ENCODE measurements at regions of chr2 and their contacts with region 1.

Region 1: DNA sequence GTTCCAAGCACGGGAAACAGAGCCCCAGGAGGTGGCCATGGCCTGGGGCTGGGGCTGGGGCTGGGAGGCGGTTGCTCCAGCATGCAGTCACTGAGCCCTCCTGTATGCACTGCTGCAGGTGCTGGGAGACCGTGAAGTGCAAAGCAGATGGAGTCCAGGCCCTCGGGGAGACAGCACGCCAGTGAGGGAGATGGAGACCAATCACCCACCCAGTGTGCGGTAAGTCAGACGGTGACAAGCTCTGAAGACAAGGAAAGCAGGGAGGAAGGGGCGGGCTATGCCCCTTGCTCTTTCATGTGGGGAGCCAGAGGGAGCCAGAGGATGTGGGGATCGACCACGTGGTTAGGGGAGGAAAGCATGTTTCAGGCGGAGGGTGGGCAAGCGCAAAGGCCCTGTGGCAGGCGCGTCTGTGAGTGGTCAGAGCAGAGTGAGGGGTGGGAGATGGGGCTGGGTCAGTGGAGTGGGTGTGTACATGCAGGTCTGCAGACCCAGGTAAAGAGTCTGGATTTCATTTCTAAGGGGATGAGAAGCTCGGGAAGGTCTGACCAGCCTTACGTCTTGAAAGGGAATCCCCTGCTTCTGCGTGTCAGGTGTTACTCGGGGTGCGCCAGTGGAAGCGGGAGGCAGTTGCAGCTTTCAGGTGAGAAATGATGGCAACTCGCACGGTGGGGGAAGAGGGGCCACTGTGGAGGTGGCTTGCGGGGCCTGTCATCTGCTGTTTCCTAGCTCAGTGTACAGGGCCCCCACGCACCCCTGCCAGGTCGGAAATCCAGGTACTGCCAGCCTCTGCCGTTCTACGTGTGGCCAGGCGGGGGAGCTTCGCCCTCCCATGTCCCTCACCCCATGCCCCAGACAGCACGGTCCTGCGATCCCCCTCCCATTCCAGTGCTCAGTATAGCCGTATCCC is 19.4 kb downstream of the RRM2 start:
- DNase-seq: peak; percentile 40 to 56 (median 47)
- H3K4me3 ChIP-seq: no peak overlapping the region
- H3K4me3 Mint-ChIP-seq: peak overlapping the region in 6 of 8 donors; percentile 32 to 75 (median 64)
- H3K27ac ChIP-seq: no peak overlapping the region
- H3K27ac Mint-ChIP-seq: peak overlapping the region; percentile 4 to 81 (median 70)
- H3K4me1 ChIP-seq: peaks cover 20% of the 10 kb centered on the region
- H3K4me1 Mint-ChIP-seq: peaks cover 16 to 27% (median 19%) of the 10 kb centered on the region in 4 donors
- H3K27me3 ChIP-seq: no peaks in the 10 kb centered on the region
- H3K27me3 Mint-ChIP-seq: no peaks in the 10 kb centered on the region

Region 2: GRCh38 chr2:10129490-10129889 is 12.5 kb before region 1 on chr2:
- CTCF ChIA-PET with region 1: interaction called, 23 read pairs
- POLR2A ChIA-PET with region 1: interaction called, 10 read pairs
- intact Hi-C with region 1: no loop called
- DNase-seq: no peak
- H3K4me3 ChIP-seq: no peak overlapping the region
- H3K4me3 Mint-ChIP-seq: no peak overlapping the region
- H3K27ac ChIP-seq: no peak overlapping the region
- H3K27ac Mint-ChIP-seq: no peak overlapping the region
- H3K4me1 ChIP-seq: peaks cover 10% of the 10 kb centered on the region
- H3K4me1 Mint-ChIP-seq: peaks cover 19 to 26% (median 22%) of the 10 kb centered on the region in 4 donors
- H3K27me3 ChIP-seq: no peaks in the 10 kb centered on the region
- H3K27me3 Mint-ChIP-seq: peaks cover 0 to 1% of the 10 kb centered on the region in 2 donors

Region 3: GRCh38 chr2:10157293-10157692 is 15.3 kb after region 1 on chr2:
- CTCF ChIA-PET with region 1: interaction called, 19 read pairs
- POLR2A ChIA-PET with region 1: interaction called, 3 read pairs
- intact Hi-C with region 1: no loop called
- DNase-seq: no peak
- H3K4me3 ChIP-seq: no peak overlapping the region
- H3K4me3 Mint-ChIP-seq: no peak overlapping the region
- H3K27ac ChIP-seq: no peak overlapping the region
- H3K27ac Mint-ChIP-seq: no peak overlapping the region
- H3K4me1 ChIP-seq: peaks cover 7% of the 10 kb centered on the region
- H3K4me1 Mint-ChIP-seq: peaks cover 4 to 12% (median 8%) of the 10 kb centered on the region in 4 donors
- H3K27me3 ChIP-seq: no peaks in the 10 kb centered on the region
- H3K27me3 Mint-ChIP-seq: no peaks in the 10 kb centered on the region